Caco-2 (cell line): ENCODE measurements at regions of chr3 and their contacts with region 1.

Region 1: GRCh38 chr3:38521391-38521987 is 25.3 kb downstream of the EXOG start:
- DNase-seq: peak; percentile 61 to 62
- H3K4me3 ChIP-seq: no peak overlapping the region
- H3K4me3 Mint-ChIP-seq: no peak overlapping the region
- H3K27ac Mint-ChIP-seq: no peak overlapping the region
- H3K4me1 ChIP-seq: no peaks in the 10 kb centered on the region
- H3K4me1 Mint-ChIP-seq: no peaks in the 10 kb centered on the region
- H3K27me3 ChIP-seq: no peaks in the 10 kb centered on the region
- H3K27me3 Mint-ChIP-seq: no peaks in the 10 kb centered on the region
- CTCF ChIP-seq: peak; percentile 77 to 87

Region 2: GRCh38 chr3:38542401-38543298 is 21.2 kb after region 1 on chr3:
- CTCF ChIA-PET with region 1: no interaction called
- POLR2A ChIA-PET with region 1: no interaction called
- intact Hi-C with region 1: no loop called
- DNase-seq: no peak
- H3K4me3 ChIP-seq: no peak overlapping the region
- H3K4me3 Mint-ChIP-seq: no peak overlapping the region
- H3K27ac Mint-ChIP-seq: no peak overlapping the region
- H3K4me1 ChIP-seq: no peaks in the 10 kb centered on the region
- H3K4me1 Mint-ChIP-seq: no peaks in the 10 kb centered on the region
- H3K27me3 ChIP-seq: no peaks in the 10 kb centered on the region
- H3K27me3 Mint-ChIP-seq: peaks cover 11% of the 10 kb centered on the region
- CTCF ChIP-seq: no peak

Region 3: GRCh38 chr3:38598791-38599190 is 77.3 kb after region 1 on chr3:
- CTCF ChIA-PET with region 1: no interaction called
- POLR2A ChIA-PET with region 1: no interaction called
- intact Hi-C with region 1: no loop called
- DNase-seq: no peak
- H3K4me3 ChIP-seq: no peak overlapping the region
- H3K4me3 Mint-ChIP-seq: no peak overlapping the region
- H3K27ac Mint-ChIP-seq: no peak overlapping the region
- H3K4me1 ChIP-seq: no peaks in the 10 kb centered on the region
- H3K4me1 Mint-ChIP-seq: no peaks in the 10 kb centered on the region
- H3K27me3 ChIP-seq: no peaks in the 10 kb centered on the region
- H3K27me3 Mint-ChIP-seq: peaks cover 22% of the 10 kb centered on the region
- CTCF ChIP-seq: no peak

Region 4: DNA sequence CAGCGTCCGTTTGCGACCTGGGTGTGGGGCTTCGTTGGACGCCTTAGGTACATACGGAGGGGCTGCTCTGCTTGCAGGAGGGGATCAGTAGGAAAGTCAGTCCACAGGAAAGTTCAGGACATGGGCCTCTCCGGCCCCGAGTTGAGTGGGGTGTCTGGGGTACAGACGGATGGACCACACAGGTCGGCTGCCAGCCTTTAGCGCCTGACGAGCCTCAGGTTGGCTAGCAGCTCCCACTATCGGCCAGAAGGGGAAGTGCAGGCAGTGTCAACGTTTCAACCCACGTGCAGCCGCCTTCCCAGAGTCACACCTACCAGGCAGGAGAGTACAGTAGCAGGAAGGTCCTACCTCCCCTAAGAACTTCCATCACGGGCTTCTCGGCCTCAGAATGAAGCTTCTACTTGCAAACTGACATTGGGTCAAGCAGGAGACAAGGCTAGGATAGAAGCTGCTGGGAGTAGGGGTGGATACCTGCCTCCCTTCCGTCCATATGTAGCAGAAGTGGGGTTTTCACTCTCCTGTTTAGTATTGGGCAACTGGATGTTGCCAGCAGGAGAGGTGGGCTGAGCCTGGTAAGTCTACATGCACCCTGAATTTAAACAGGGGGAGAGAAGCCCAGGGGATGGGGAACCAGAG is 129.8 kb after region 1 on chr3:
- CTCF ChIA-PET with region 1: interaction called, 50 read pairs
- POLR2A ChIA-PET with region 1: no interaction called
- intact Hi-C with region 1: loop called (anchors 1 kb)
- DNase-seq: peak; percentile 55 to 70
- H3K4me3 ChIP-seq: no peak overlapping the region
- H3K4me3 Mint-ChIP-seq: no peak overlapping the region
- H3K27ac Mint-ChIP-seq: no peak overlapping the region
- H3K4me1 ChIP-seq: peaks cover 5% of the 10 kb centered on the region; the same call in 1 of the 2 replicates
- H3K4me1 Mint-ChIP-seq: no peaks in the 10 kb centered on the region
- H3K27me3 ChIP-seq: no peaks in the 10 kb centered on the region
- H3K27me3 Mint-ChIP-seq: peaks cover 6% of the 10 kb centered on the region
- CTCF ChIP-seq: peak; percentile 91 to 93

Region 5: DNA sequence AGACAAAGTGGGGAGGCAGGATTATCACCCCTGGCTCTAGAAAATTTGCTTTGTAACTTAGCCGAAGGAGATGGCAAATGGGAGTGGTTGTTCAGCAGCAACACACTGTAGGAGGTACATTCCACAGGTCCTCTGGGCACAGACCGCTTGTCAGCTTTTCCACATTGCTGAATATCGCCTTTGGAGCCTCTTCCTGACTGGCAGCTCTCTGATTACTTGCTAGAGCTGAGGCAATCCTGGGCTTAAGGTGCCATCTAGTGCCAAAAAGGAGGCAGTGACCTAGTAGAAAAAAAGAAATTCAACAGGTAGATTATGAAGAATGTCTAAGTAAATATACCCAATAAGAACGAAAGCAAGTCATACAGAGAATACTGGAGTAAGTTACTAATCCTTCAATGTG is 141.1 kb after region 1 on chr3:
- CTCF ChIA-PET with region 1: interaction called, 5 read pairs
- POLR2A ChIA-PET with region 1: no interaction called
- intact Hi-C with region 1: loop called (anchors 1 kb)
- DNase-seq: peak in 1 of 2 experiments; percentile 45
- H3K4me3 ChIP-seq: no peak overlapping the region
- H3K4me3 Mint-ChIP-seq: no peak overlapping the region
- H3K27ac Mint-ChIP-seq: no peak overlapping the region
- H3K4me1 ChIP-seq: no peaks in the 10 kb centered on the region
- H3K4me1 Mint-ChIP-seq: no peaks in the 10 kb centered on the region
- H3K27me3 ChIP-seq: no peaks in the 10 kb centered on the region
- H3K27me3 Mint-ChIP-seq: peaks cover 4% of the 10 kb centered on the region
- CTCF ChIP-seq: peak; percentile 29 to 41

Region 6: GRCh38 chr3:38843898-38844297 is 322.4 kb after region 1 on chr3:
- CTCF ChIA-PET with region 1: interaction called, 3 read pairs
- POLR2A ChIA-PET with region 1: no interaction called
- intact Hi-C with region 1: loop called (anchors 5 kb)
- DNase-seq: peak in 1 of 2 experiments; percentile 17
- H3K4me3 ChIP-seq: no peak overlapping the region
- H3K4me3 Mint-ChIP-seq: no peak overlapping the region
- H3K27ac Mint-ChIP-seq: no peak overlapping the region
- H3K4me1 ChIP-seq: no peaks in the 10 kb centered on the region
- H3K4me1 Mint-ChIP-seq: no peaks in the 10 kb centered on the region
- H3K27me3 ChIP-seq: no peaks in the 10 kb centered on the region
- H3K27me3 Mint-ChIP-seq: peaks cover 14% of the 10 kb centered on the region
- CTCF ChIP-seq: peak; percentile 34 to 37

Region 7: DNA sequence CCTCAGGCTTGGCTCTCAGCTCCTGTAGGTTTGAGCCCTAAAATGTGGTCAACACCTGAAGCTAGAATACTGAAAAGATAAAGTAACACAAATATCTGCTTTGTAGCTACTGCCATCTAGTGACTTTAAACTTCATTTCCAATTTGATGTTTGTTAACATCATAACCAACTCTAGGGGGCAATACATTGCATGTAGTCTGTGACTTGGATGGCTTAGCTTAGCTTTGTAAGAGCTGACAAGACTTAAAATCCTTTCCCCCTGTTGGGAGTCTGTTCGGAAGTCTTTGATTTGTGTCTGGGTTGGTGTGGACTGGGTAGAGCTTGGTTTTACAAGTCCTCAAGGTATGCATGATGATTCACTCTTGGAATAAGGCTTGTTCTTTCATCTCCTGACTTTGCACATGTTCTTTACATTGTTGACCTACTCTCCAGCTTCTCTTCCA is 478.5 kb after region 1 on chr3:
- CTCF ChIA-PET with region 1: interaction called, 13 read pairs
- POLR2A ChIA-PET with region 1: no interaction called
- intact Hi-C with region 1: no loop called
- DNase-seq: peak in 1 of 2 experiments; percentile 42
- H3K4me3 ChIP-seq: no peak overlapping the region
- H3K4me3 Mint-ChIP-seq: no peak overlapping the region
- H3K27ac Mint-ChIP-seq: no peak overlapping the region
- H3K4me1 ChIP-seq: no peaks in the 10 kb centered on the region
- H3K4me1 Mint-ChIP-seq: no peaks in the 10 kb centered on the region
- H3K27me3 ChIP-seq: no peaks in the 10 kb centered on the region
- H3K27me3 Mint-ChIP-seq: peaks cover 4% of the 10 kb centered on the region
- CTCF ChIP-seq: peak; percentile 81 to 85